Activated CD4-positive, alpha-beta T cell treated with anti-CD3 and anti-CD28 coated beads for 36 hours (primary cell): ENCODE measurements at regions of chr3 and their contacts with region 1.

Region 1: GRCh38 chr3:53045518-53046170 is at the start of gene SFMBT1:
- DNase-seq: peak; percentile 87
- ATAC-seq: peak; percentile 62
- H3K4me3 Mint-ChIP-seq: peak within 1 kb of the TSS; percentile 93
- H3K27ac Mint-ChIP-seq: peak within 1 kb of the TSS; percentile 96
- H3K4me1 Mint-ChIP-seq: peaks cover 43% of the 10 kb centered on the region
- H3K27me3 Mint-ChIP-seq: no peaks in the 10 kb centered on the region
- total RNA-seq, gene SFMBT1: 14.5 to 20.3 TPM

Region 2: GRCh38 chr3:52536369-52537164 is 509.1 kb before region 1 on chr3 and contains the start of gene UQCC5:
- CTCF ChIA-PET with region 1: no interaction called
- POLR2A ChIA-PET with region 1: no interaction called
- intact Hi-C with region 1: loop called in 1 of 2 experiments (anchors 1 kb)
- DNase-seq: peak; percentile 99
- ATAC-seq: peak; percentile 91
- H3K4me3 Mint-ChIP-seq: peak within 1 kb of the TSS; percentile 100
- H3K27ac Mint-ChIP-seq: peak within 1 kb of the TSS; percentile 99
- H3K4me1 Mint-ChIP-seq: peaks cover 49% of the 10 kb centered on the region
- H3K27me3 Mint-ChIP-seq: no peaks in the 10 kb centered on the region
- total RNA-seq, gene UQCC5: 12.0 to 12.7 TPM

Region 3: DNA sequence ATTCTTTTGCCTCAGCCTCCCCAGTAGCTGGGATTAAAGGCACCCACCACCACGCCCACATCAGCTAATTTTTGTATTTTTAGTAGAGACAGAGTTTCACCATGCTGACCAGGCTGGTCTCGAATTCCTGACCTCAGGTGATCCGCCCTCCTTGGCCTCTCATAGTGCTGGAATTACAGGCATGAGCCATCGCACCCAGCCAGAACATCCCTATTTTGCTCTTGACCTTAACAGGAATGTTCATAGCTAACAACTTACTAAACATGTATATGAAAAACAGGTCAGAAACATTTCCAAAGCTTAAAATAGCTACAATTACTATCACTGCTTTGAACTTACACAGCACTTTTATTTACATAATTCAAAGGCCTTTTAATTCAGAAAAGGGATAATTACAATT is 475.6 kb before region 1 on chr3:
- CTCF ChIA-PET with region 1: no interaction called
- POLR2A ChIA-PET with region 1: no interaction called
- intact Hi-C with region 1: no loop called
- DNase-seq: no peak
- ATAC-seq: no peak
- H3K4me3 Mint-ChIP-seq: no peak overlapping the region
- H3K27ac Mint-ChIP-seq: peak overlapping the region; percentile 8
- H3K4me1 Mint-ChIP-seq: no peaks in the 10 kb centered on the region
- H3K27me3 Mint-ChIP-seq: no peaks in the 10 kb centered on the region

Region 4: GRCh38 chr3:52693071-52693470 is 352.6 kb before region 1 on chr3:
- CTCF ChIA-PET with region 1: no interaction called
- POLR2A ChIA-PET with region 1: interaction called, 10 read pairs
- intact Hi-C with region 1: no loop called
- DNase-seq: no peak
- ATAC-seq: no peak
- H3K4me3 Mint-ChIP-seq: no peak overlapping the region
- H3K27ac Mint-ChIP-seq: peak overlapping the region; percentile 77
- H3K4me1 Mint-ChIP-seq: peaks cover 66% of the 10 kb centered on the region
- H3K27me3 Mint-ChIP-seq: no peaks in the 10 kb centered on the region

Region 5: GRCh38 chr3:52770496-52771333 is 274.9 kb before region 1 on chr3 and contains the start of gene NEK4:
- CTCF ChIA-PET with region 1: no interaction called
- POLR2A ChIA-PET with region 1: no interaction called
- intact Hi-C with region 1: loop called in 1 of 2 experiments (anchors 2 kb)
- DNase-seq: peak; percentile 93
- ATAC-seq: peak; percentile 98
- H3K4me3 Mint-ChIP-seq: peak within 1 kb of the TSS; percentile 81
- H3K27ac Mint-ChIP-seq: peak within 1 kb of the TSS; percentile 94
- H3K4me1 Mint-ChIP-seq: peaks cover 15% of the 10 kb centered on the region
- H3K27me3 Mint-ChIP-seq: no peaks in the 10 kb centered on the region
- total RNA-seq, gene NEK4: 19.1 to 21.4 TPM

Region 6: DNA sequence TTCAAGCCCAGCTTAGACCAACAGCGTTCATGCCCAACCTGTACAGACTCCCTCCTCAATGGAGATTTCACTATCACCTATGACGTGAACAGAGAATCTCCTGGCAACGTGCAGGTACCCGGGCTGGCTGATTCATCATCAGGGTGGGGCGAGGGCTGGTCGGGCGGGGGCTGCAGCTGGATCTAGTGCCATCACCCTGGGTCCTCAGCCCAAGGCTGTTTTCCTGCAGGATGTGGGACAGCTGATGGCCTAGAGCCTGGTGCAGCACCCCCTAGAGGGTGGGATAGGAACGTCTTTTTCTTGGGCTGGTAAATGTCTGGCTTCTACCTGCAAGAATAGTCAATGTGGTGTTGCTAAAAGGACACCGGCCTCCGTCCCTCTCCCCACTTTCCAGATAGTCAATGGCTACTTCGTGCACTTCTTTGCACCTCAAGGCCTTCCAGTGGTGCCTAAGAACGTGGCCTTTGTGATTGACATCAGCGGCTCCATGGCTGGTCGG is 246.6 kb before region 1 on chr3:
- CTCF ChIA-PET with region 1: no interaction called
- POLR2A ChIA-PET with region 1: no interaction called
- intact Hi-C with region 1: no loop called
- DNase-seq: peak; percentile 51
- ATAC-seq: peak; percentile 63
- H3K4me3 Mint-ChIP-seq: no peak overlapping the region
- H3K27ac Mint-ChIP-seq: no peak overlapping the region
- H3K4me1 Mint-ChIP-seq: no peaks in the 10 kb centered on the region
- H3K27me3 Mint-ChIP-seq: peaks cover under 1% of the 10 kb centered on the region

Region 7: DNA sequence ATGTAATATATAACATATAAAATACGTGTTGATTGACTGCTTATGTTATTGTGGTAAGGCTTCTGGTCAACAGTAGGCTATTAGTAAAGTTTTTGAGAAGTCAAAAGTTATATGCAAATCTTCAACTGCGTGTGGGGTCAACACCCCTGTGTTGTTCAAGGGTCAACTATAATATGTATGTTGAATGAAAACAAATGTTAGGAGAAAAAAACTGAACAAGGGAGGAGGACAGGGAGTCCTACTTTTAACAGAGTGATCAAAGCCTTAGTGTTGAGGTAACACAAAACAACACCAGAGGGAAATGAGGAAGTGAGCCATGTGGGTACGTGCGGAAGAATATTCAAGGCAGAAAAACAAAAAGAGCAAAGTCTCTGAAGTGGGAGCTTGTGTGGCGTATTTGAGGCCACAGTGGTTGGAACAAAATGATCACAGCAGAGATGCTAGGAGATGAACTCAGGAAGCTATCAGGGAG is 62.3 kb before region 1 on chr3:
- CTCF ChIA-PET with region 1: interaction called, 3 read pairs
- POLR2A ChIA-PET with region 1: interaction called, 6 read pairs
- intact Hi-C with region 1: loop called (anchors 1 to 2 kb)
- DNase-seq: peak; percentile 86
- ATAC-seq: peak; percentile 83
- H3K4me3 Mint-ChIP-seq: peak overlapping the region; percentile 55
- H3K27ac Mint-ChIP-seq: peak overlapping the region; percentile 95
- H3K4me1 Mint-ChIP-seq: peaks cover 44% of the 10 kb centered on the region
- H3K27me3 Mint-ChIP-seq: no peaks in the 10 kb centered on the region

Region 8: GRCh38 chr3:53255775-53256703 is 210.4 kb after region 1 on chr3 and contains the start of gene TKT:
- CTCF ChIA-PET with region 1: no interaction called
- POLR2A ChIA-PET with region 1: no interaction called
- intact Hi-C with region 1: loop called in 1 of 2 experiments (anchors 2 kb)
- DNase-seq: peak; percentile 92
- ATAC-seq: peak; percentile 85
- H3K4me3 Mint-ChIP-seq: peak within 1 kb of the TSS; percentile 87
- H3K27ac Mint-ChIP-seq: peak within 1 kb of the TSS; percentile 53
- H3K4me1 Mint-ChIP-seq: peaks cover 32% of the 10 kb centered on the region
- H3K27me3 Mint-ChIP-seq: no peaks in the 10 kb centered on the region
- total RNA-seq, gene TKT: 320 to 418 TPM

Region 9: DNA sequence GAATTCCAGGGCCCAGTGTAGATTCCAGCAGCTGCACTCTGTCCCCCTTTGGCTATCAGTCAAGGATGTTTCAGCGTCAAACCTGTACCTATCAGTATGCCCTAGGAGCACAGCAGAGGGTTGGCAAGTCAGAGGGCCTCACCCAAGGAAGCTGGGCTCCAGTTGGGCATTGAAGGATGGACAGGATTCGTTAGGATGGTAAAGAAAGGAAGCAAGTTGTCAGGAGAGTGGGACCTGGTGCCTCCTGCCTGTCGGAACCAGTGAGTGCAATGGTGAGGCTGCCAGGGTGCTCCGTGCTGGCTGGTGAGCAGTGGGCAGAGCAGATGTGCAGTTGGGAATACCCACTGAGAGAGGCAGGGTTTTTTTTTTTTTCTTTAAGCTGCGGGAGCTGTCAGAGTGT is 643.3 kb after region 1 on chr3:
- CTCF ChIA-PET with region 1: no interaction called
- POLR2A ChIA-PET with region 1: no interaction called
- intact Hi-C with region 1: no loop called
- DNase-seq: no peak
- ATAC-seq: no peak
- H3K4me3 Mint-ChIP-seq: no peak overlapping the region
- H3K27ac Mint-ChIP-seq: no peak overlapping the region
- H3K4me1 Mint-ChIP-seq: no peaks in the 10 kb centered on the region
- H3K27me3 Mint-ChIP-seq: peaks cover 4% of the 10 kb centered on the region